Cardiac septum (tissue), 1 donor: ENCODE measurements at regions of chr17 and their contacts with region 1.

Region 1: GRCh38 chr17:43388359-43389045 is 10.3 kb upstream of the ARL4D start:
- DNase-seq: peak; percentile 97

Region 2: GRCh38 chr17:43368740-43369506 is 19.6 kb before region 1 on chr17:
- intact Hi-C with region 1: loop called (anchors 1 kb)
- DNase-seq: peak; percentile 90

Region 3: GRCh38 chr17:43467981-43468581 is 79.6 kb after region 1 on chr17:
- intact Hi-C with region 1: no loop called
- DNase-seq: no peak